Activated CD4-positive, alpha-beta memory T cell treated with anti-CD3 and anti-CD28 coated beads, Interleukin-2, amount 10 ng/mL, durations not matched to agents 7 days and 5 days (primary cell): ENCODE measurements at regions of chr1 and their contacts with region 1.

Region 1: DNA sequence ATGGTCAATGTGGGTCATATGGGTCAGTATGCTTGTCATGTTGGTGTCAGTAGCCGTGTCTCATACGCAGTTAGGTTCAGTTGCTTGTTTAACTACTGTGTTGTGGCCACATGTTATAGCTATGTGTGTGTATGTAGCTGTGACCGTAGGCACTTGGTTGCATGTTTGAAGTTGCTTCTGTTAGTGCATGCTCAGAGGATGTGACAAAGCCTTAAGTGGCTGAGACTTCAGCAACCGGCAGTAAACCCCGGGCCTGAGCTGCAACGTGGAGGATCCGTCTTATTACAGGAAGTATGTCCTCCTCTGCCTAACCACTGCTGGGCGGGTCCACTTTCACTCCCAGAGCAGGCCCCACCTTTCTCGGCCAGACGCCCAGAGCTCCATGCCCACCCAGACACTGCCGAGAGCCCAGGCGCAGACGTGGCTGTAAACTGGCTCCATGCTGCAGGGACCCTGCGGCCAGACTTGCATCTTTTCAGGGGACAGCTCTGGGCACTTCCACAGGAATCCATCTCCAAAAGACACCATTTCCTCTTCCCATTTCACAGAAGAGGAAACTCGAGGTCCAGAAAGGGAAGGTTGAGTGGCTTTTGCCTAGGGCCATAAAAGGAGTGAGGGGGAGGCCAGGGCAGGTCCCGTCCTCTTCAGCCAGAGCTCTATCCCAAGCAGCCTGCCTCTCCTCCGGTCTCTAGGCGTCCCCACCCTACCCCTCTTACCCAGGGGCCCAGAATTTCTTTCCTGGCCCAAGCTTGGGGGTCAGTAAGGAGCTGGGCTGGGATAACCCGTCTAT is 2.1 kb downstream of the TCEA3 start:
- DNase-seq: peak; percentile 73
- H3K4me3 Mint-ChIP-seq: no peak overlapping the region
- H3K27ac Mint-ChIP-seq: peak overlapping the region; percentile 36
- H3K4me1 Mint-ChIP-seq: peaks cover 33% of the 10 kb centered on the region
- H3K27me3 Mint-ChIP-seq: peaks cover 44% of the 10 kb centered on the region

Region 2: DNA sequence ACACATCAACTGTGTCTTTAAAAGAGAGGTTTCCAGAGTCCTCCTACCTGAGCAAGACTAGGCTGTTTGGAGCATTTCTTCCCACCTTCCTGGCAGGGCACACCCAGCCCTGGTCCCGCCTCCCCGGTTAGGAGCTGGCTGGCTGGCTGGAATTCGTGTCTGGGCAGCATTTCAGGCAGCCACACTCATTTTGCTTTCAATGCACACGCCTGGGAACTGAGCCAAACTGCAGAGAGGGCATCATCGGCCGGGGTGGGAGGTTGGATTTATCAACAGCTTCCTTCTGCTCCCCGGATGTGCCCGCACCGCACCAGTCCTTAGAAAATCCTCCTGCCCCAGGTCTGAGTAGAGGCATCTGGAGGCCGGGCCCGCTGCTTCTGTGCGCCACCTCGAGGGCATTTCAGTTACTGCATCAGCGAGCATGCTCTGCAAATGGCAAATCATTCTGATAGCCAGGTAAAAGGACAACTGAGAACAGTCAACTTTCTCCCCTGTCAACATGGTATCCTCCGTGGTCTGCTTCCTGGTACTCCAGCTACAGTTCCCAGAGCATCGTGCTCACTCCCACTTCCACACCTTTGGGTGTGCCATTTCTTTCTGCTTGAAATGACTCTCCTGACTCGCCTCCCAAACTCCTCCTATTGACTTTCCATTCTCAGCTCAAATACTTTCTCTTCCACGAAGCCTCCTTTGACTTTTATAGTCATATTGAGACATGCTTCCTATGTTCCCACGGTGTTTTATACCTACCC is 18.5 kb before region 1 on chr1:
- CTCF ChIA-PET with region 1: interaction called, 11 read pairs
- POLR2A ChIA-PET with region 1: no interaction called
- DNase-seq: peak; percentile 87
- H3K4me3 Mint-ChIP-seq: no peak overlapping the region
- H3K27ac Mint-ChIP-seq: no peak overlapping the region
- H3K4me1 Mint-ChIP-seq: peaks cover 18% of the 10 kb centered on the region
- H3K27me3 Mint-ChIP-seq: no peaks in the 10 kb centered on the region